K562 (cell line): ENCODE measurements at regions of chr1 and their contacts with region 1.

Region 1: DNA sequence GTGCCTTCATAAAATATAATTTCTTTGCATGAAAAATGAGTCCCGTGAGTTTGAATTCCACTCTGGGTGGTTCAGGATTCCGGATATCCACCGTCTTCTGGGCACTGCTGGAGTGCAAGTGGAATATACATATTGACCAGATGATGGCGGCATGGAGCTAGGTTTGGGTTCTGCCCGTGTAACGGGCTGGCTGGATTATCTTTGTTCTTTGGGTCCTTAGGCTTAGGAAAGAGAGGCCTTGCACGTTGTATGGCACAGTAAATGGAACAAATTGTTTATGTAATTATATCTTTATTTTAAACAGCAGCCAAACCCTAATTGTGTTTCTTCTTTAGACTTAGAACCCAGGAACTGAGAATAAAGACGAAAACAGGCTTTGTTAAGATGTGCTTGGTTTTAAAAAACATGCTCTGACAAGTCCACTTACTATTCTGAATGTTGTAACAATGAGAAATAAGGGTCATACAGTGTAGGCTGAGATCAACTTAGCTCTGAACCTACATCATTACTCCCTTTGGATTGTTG is 13.5 kb upstream of the ACBD6 start:
- DNase-seq: peak; percentile 82 to 95 (median 86)
- ATAC-seq: peak; percentile 98
- H3K4me3 ChIP-seq: no peak overlapping the region
- H3K27ac ChIP-seq: peak overlapping the region; percentile 10; the same call in 1 of the 3 replicates
- H3K4me1 ChIP-seq: peaks cover 3 to 9% of the 10 kb centered on the region in 2 experiments; a peak in 3 of 5 replicates
- H3K27me3 ChIP-seq: no peaks in the 10 kb centered on the region
- CTCF ChIP-seq: peak; percentile 93 to 97 (median 94)
- EP300 ChIP-seq: peak; percentile 32; the same call in 1 of the 2 replicates
- POLR2A ChIP-seq: no peak
- RAD21 ChIP-seq: peak; percentile 98 to 99

Region 2: DNA sequence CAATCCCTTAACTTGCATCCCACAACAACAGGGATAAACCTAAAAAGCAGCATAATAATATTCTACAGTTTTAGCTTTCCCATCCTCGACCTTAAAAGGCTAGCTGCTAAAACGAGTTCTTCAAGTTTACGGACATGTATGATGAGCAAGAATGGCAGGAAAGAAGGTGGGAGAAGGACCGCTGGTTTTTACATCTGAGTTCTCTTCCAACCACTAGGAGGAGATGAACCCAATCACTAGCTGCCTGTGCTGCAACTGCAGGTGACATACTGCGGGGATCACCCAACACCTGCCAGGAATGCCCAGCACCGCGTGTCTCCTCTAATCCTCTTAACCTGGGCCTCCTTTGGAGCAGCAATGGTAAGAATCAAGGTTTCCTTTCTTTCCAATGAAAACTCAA is 1410.6 kb before region 1 on chr1:
- CTCF ChIA-PET with region 1: no interaction called
- POLR2A ChIA-PET with region 1: no interaction called
- in situ Hi-C with region 1: no loop called
- intact Hi-C with region 1: no loop called
- DNase-seq: peak; percentile 21 to 58 (median 48)
- ATAC-seq: peak; percentile 82
- H3K4me3 ChIP-seq: no peak overlapping the region
- H3K27ac ChIP-seq: no peak overlapping the region
- H3K4me1 ChIP-seq: no peaks in the 10 kb centered on the region
- H3K27me3 ChIP-seq: no peaks in the 10 kb centered on the region
- CTCF ChIP-seq: peak; percentile 43 to 72 (median 52)
- EP300 ChIP-seq: no peak
- POLR2A ChIP-seq: no peak
- RAD21 ChIP-seq: peak in 1 of 2 experiments; percentile 35; a peak in 2 of 4 replicates

Region 3: DNA sequence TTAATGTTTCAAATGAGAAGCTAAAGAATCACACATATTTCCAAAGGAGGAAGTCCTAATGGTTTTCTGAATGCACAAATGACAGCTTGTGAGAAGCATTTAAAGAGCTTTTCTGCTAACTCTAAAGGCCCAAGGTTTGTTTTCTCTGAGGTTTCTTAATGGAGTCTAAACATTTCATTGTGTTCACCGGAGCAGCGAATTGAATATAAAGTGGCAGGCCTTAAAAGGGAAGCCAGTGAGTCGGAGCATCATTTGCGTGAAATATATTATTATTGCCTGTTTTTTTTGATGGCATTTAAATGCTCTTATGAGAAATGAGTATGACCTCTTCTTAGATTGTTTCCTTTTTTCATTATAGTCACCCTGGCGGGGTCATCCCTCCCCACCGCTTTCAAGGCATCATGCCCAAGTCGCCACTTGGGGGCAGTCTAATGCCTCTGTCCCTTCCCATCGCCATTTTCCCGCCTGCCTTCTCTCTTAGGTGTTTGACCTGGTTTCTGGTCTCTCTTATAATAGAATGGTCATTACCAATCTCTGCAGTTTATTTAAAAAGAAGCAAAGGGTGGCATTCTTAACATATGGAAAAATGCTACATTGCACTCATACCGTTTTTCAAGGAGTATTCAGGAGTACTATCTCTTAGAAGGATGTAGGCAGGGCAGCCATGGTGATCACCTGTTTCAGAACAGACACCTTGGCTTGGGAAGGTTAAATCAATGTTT is 17.5 kb after region 1 on chr1:
- CTCF ChIA-PET with region 1: interaction called, 3 read pairs
- POLR2A ChIA-PET with region 1: interaction called, 4 read pairs
- in situ Hi-C with region 1: no loop called
- intact Hi-C with region 1: loop called (anchors 2 kb)
- DNase-seq: peak; percentile 85 to 93 (median 88)
- ATAC-seq: peak; percentile 96
- H3K4me3 ChIP-seq: no peak overlapping the region
- H3K27ac ChIP-seq: no peak overlapping the region
- H3K4me1 ChIP-seq: peaks cover 0 to 10% of the 10 kb centered on the region in 2 experiments; a peak in 2 of 5 replicates
- H3K27me3 ChIP-seq: no peaks in the 10 kb centered on the region
- CTCF ChIP-seq: peak; percentile 93 to 98 (median 97)
- EP300 ChIP-seq: 0 out of 2 replicates have a peak, but pooled peaks have one; percentile 2
- POLR2A ChIP-seq: no peak
- RAD21 ChIP-seq: peak; percentile 99

Region 4: GRCh38 chr1:180920702-180921101 is 404.8 kb after region 1 on chr1:
- CTCF ChIA-PET with region 1: no interaction called
- POLR2A ChIA-PET with region 1: interaction called, 3 read pairs
- in situ Hi-C with region 1: no loop called
- intact Hi-C with region 1: loop called (anchors 2 kb)
- DNase-seq: peak; percentile 41 to 50 (median 48)
- ATAC-seq: peak; percentile 58
- H3K4me3 ChIP-seq: no peak overlapping the region
- H3K27ac ChIP-seq: no peak overlapping the region
- H3K4me1 ChIP-seq: peaks cover 22 to 40% of the 10 kb centered on the region in 2 experiments; a peak in 4 of 5 replicates
- H3K27me3 ChIP-seq: no peaks in the 10 kb centered on the region; a peak in 1 of 5 replicates
- CTCF ChIP-seq: peak; percentile 56 to 78 (median 71)
- EP300 ChIP-seq: no peak
- POLR2A ChIP-seq: no peak
- RAD21 ChIP-seq: peak in 1 of 2 experiments; percentile 65; a peak in 2 of 4 replicates

Region 5: GRCh38 chr1:181142096-181142958 is 626.4 kb after region 1 on chr1:
- CTCF ChIA-PET with region 1: interaction called, 3 read pairs
- POLR2A ChIA-PET with region 1: interaction called, 3 read pairs
- in situ Hi-C with region 1: no loop called
- intact Hi-C with region 1: loop called (anchors 5 kb)
- DNase-seq: peak; percentile 90 to 94 (median 94)
- ATAC-seq: peak; percentile 98
- H3K4me3 ChIP-seq: no peak overlapping the region
- H3K27ac ChIP-seq: peak overlapping the region; percentile 36; the same call in 1 of the 3 replicates
- H3K4me1 ChIP-seq: peaks cover 20 to 28% of the 10 kb centered on the region in 2 experiments
- H3K27me3 ChIP-seq: no peaks in the 10 kb centered on the region
- CTCF ChIP-seq: peak; percentile 98 to 100 (median 99)
- EP300 ChIP-seq: peak; percentile 46; the same call in 1 of the 2 replicates
- POLR2A ChIP-seq: no peak
- RAD21 ChIP-seq: peak; percentile 100